ENCODE measurements at regions of chr18 and their contacts with region 1.

Region 1: GRCh38 chr18:9913526-9914333 is at the start of gene VAPA:
- DNase-seq: peak; percentile 98
- ATAC-seq: peak; percentile 83
- H3K4me3 ChIP-seq: peak within 1 kb of the TSS; percentile 78
- H3K27ac ChIP-seq: peak within 1 kb of the TSS; percentile 84
- H3K4me1 ChIP-seq: peaks cover 33% of the 10 kb centered on the region
- H3K27me3 ChIP-seq: no peaks in the 10 kb centered on the region
- CTCF ChIP-seq: no peak
- total RNA-seq, gene VAPA: 281 and 293 TPM in 2 replicates

Region 2: GRCh38 chr18:9482790-9483189 is 430.9 kb before region 1 on chr18:
- CTCF ChIA-PET with region 1: no interaction called
- POLR2A ChIA-PET with region 1: no interaction called
- intact Hi-C with region 1: no loop called
- DNase-seq: no peak
- ATAC-seq: no peak
- H3K4me3 ChIP-seq: no peak overlapping the region
- H3K27ac ChIP-seq: no peak overlapping the region
- H3K4me1 ChIP-seq: no peaks in the 10 kb centered on the region
- H3K27me3 ChIP-seq: no peaks in the 10 kb centered on the region
- CTCF ChIP-seq: no peak

Region 3: GRCh38 chr18:9614401-9615279 is 299.1 kb before region 1 on chr18 and contains the start of gene PPP4R1:
- CTCF ChIA-PET with region 1: no interaction called
- POLR2A ChIA-PET with region 1: no interaction called
- intact Hi-C with region 1: loop called (anchors 10 kb)
- DNase-seq: peak; percentile 72
- ATAC-seq: peak; percentile 42
- H3K4me3 ChIP-seq: peak within 1 kb of the TSS; percentile 78
- H3K27ac ChIP-seq: peak within 1 kb of the TSS; percentile 95
- H3K4me1 ChIP-seq: peaks cover 68% of the 10 kb centered on the region
- H3K27me3 ChIP-seq: no peaks in the 10 kb centered on the region
- CTCF ChIP-seq: no peak
- total RNA-seq, gene PPP4R1: 154 and 185 TPM in 2 replicates

Region 4: DNA sequence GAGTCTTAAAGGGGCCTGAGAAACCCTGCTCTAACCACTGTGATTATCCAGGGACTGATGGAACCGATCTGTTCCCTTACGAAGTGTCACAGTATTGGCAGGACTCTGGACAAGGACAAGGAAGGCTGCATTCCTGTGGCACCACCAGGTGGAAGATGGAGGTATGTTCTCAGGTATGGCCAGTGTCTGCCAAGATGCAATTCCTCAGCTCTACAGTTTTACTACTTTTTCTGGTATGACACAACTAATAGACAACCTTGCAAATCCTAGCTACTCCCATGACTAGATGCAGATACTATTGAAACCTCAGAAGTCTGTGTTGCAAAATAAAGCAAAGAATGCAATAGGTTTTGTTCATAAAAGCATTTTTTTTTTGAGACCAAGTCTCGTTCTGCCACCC is 191.0 kb before region 1 on chr18:
- CTCF ChIA-PET with region 1: no interaction called
- POLR2A ChIA-PET with region 1: no interaction called
- intact Hi-C with region 1: loop called (anchors 5 kb)
- DNase-seq: peak; percentile 83
- ATAC-seq: peak; percentile 60
- H3K4me3 ChIP-seq: no peak overlapping the region
- H3K27ac ChIP-seq: no peak overlapping the region
- H3K4me1 ChIP-seq: peaks cover 12% of the 10 kb centered on the region
- H3K27me3 ChIP-seq: no peaks in the 10 kb centered on the region
- CTCF ChIP-seq: peak; percentile 81

Region 5: GRCh38 chr18:9814431-9814830 is 99.3 kb before region 1 on chr18:
- CTCF ChIA-PET with region 1: no interaction called
- POLR2A ChIA-PET with region 1: no interaction called
- intact Hi-C with region 1: loop called (anchors 5 kb)
- DNase-seq: peak; percentile 91
- ATAC-seq: peak; percentile 99
- H3K4me3 ChIP-seq: no peak overlapping the region
- H3K27ac ChIP-seq: peak overlapping the region; percentile 53
- H3K4me1 ChIP-seq: peaks cover 14% of the 10 kb centered on the region
- H3K27me3 ChIP-seq: no peaks in the 10 kb centered on the region
- CTCF ChIP-seq: no peak

Region 6: GRCh38 chr18:9926223-9926894 is 12.6 kb after region 1 on chr18:
- CTCF ChIA-PET with region 1: no interaction called
- POLR2A ChIA-PET with region 1: no interaction called
- intact Hi-C with region 1: loop called (anchors 1 kb)
- DNase-seq: no peak
- ATAC-seq: no peak; the same call in 1 of the 2 replicates
- H3K4me3 ChIP-seq: no peak overlapping the region
- H3K27ac ChIP-seq: no peak overlapping the region
- H3K4me1 ChIP-seq: peaks cover 27% of the 10 kb centered on the region
- H3K27me3 ChIP-seq: no peaks in the 10 kb centered on the region
- CTCF ChIP-seq: no peak

Region 7: GRCh38 chr18:9984080-9984479 is 70.3 kb after region 1 on chr18:
- CTCF ChIA-PET with region 1: no interaction called
- POLR2A ChIA-PET with region 1: no interaction called
- intact Hi-C with region 1: no loop called
- DNase-seq: no peak
- ATAC-seq: no peak
- H3K4me3 ChIP-seq: no peak overlapping the region
- H3K27ac ChIP-seq: no peak overlapping the region
- H3K4me1 ChIP-seq: no peaks in the 10 kb centered on the region
- H3K27me3 ChIP-seq: peaks cover 38% of the 10 kb centered on the region
- CTCF ChIP-seq: no peak

Region 8: DNA sequence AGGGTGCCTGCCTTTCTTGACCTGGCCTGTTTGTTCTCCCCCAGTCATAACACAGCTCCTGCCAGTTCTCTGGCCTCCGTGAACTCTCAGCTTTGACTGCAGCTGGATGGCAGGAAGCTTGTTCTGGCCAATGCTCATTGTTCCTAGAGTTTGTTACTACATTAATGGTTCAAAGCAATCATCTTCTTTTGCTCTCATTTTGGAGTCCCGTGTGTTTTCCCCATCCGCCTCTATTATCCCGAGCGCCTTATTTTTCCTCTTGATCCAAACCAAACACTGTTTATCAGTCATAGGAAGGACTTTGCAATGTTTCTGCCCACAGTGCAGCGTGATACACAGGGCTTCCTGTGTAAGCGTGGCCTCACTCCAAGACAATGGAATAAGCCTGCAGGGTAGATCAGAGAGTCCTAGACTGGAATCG is 356.4 kb after region 1 on chr18:
- CTCF ChIA-PET with region 1: no interaction called
- POLR2A ChIA-PET with region 1: no interaction called
- intact Hi-C with region 1: no loop called
- DNase-seq: no peak
- ATAC-seq: no peak
- H3K4me3 ChIP-seq: no peak overlapping the region
- H3K27ac ChIP-seq: no peak overlapping the region
- H3K4me1 ChIP-seq: no peaks in the 10 kb centered on the region
- H3K27me3 ChIP-seq: peaks cover 55% of the 10 kb centered on the region
- CTCF ChIP-seq: no peak

Region 9: DNA sequence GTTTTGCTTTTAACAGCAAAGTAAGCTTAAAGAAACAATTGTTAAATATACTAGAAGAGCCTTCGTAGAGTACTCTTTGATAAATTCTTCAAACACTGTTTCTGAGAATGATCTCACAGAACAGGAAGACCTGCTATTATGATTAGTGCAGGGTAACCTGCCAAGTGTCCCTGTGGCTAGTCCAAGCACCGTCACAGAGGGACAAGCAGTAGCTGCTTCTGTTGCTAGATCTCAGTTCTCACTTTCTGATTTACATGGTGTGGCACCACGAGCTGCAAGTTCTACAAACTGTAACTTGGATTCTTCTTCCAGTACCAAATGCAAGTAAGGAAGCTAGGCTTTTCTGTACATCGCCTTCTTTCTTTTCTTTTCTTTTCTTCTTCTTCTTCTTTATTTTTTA is 1114.1 kb after region 1 on chr18:
- CTCF ChIA-PET with region 1: no interaction called
- POLR2A ChIA-PET with region 1: no interaction called
- intact Hi-C with region 1: no loop called
- DNase-seq: no peak
- ATAC-seq: no peak
- H3K4me3 ChIP-seq: no peak overlapping the region
- H3K27ac ChIP-seq: no peak overlapping the region
- H3K4me1 ChIP-seq: no peaks in the 10 kb centered on the region
- H3K27me3 ChIP-seq: peaks cover 75% of the 10 kb centered on the region
- CTCF ChIP-seq: no peak